GM23248 (cell line): ENCODE measurements at regions of chr4 and their contacts with region 1.

Region 1: DNA sequence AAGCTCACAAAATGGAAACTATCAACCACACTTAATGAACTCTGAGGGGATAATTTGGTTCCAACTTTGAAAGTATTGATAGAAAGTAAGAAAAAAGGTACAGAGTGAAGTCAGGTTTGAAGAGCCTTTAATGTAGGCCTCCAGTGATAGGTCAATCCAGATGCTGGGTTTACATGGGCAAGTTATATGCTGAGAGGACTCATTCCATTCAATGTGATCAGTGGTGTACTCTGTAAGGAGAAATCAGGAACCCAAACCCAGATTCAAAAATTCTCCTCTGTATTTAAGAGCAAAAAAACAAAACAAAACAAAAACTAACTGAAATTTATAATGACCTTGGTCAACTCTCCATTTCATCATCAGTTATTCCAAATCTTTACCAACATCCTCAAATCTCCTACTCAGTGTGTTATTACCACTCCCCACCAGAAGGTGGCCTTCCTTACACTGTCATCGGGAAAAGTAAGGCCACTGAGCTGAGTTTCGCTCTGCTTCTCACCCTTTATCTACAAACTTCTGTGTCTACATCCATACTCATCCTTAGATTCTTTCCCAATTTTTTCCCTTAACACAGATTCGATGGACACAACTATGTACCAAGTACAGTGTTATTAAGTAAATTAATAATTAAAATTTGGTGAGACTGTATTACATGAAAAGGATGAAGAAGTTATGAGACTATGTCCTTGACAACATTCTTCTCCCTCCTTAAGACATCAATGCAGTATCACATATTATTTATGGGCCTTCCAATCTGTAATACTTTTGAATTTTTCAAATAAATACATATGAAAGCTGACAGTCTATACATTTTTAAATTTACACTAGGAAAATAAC is 88.3 kb downstream of the ZAR1 start:
- DNase-seq: peak; percentile 81
- H3K4me3 ChIP-seq: no peak overlapping the region
- H3K27ac ChIP-seq: no peak overlapping the region
- H3K4me1 ChIP-seq: no peaks in the 10 kb centered on the region
- H3K27me3 ChIP-seq: no peaks in the 10 kb centered on the region

Region 2: GRCh38 chr4:48710446-48711209 is 132.3 kb after region 1 on chr4:
- in situ Hi-C with region 1: no loop called
- DNase-seq: peak; percentile 43
- H3K4me3 ChIP-seq: no peak overlapping the region
- H3K27ac ChIP-seq: no peak overlapping the region
- H3K4me1 ChIP-seq: peaks cover 16% of the 10 kb centered on the region
- H3K27me3 ChIP-seq: no peaks in the 10 kb centered on the region

Region 3: GRCh38 chr4:48779998-48780742 is 201.8 kb after region 1 on chr4 and contains the start of gene FRYL:
- in situ Hi-C with region 1: loop called (anchors 25 kb)
- DNase-seq: peak; percentile 100
- H3K4me3 ChIP-seq: peak within 1 kb of the TSS; percentile 98
- H3K27ac ChIP-seq: peak within 1 kb of the TSS; percentile 91
- H3K4me1 ChIP-seq: peaks cover 22% of the 10 kb centered on the region
- H3K27me3 ChIP-seq: no peaks in the 10 kb centered on the region
- total RNA-seq, gene FRYL: 28.4 and 34.7 TPM in 2 replicates

Region 4: DNA sequence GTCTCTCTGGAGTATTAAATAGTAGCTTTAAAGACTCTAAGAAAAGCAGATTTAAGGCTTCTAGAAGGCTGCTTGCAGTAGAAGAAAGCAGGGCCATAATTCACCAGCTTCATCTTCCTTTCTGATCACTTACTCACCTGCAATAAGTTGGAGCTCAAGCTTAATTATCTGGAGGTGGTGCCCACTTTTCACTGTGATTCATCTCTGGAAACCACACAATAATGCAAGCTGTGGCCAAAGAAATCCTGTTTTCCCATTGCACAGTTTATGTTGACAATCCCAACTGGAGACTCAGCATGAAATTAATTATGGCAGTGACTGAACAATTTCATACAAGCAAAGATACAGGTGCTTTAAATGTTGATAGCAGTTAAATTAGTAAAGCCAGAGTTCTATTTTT is 422.5 kb after region 1 on chr4:
- in situ Hi-C with region 1: no loop called
- DNase-seq: no peak
- H3K4me3 ChIP-seq: no peak overlapping the region
- H3K27ac ChIP-seq: no peak overlapping the region
- H3K4me1 ChIP-seq: no peaks in the 10 kb centered on the region
- H3K27me3 ChIP-seq: no peaks in the 10 kb centered on the region